ENCODE measurements at regions of chrX and their contacts with region 1.

Region 1: GRCh38 chrX:10722851-10723250 is 102.5 kb upstream of the MID1 start:
- DNase-seq: no peak
- H3K4me3 ChIP-seq: no peak overlapping the region
- CTCF ChIP-seq: peak; percentile 49

Region 2: GRCh38 chrX:9656277-9656676 is 1066.6 kb before region 1 on chrX:
- CTCF ChIA-PET with region 1: no interaction called
- POLR2A ChIA-PET with region 1: no interaction called
- DNase-seq: no peak
- H3K4me3 ChIP-seq: no peak overlapping the region
- CTCF ChIP-seq: no peak

Region 3: DNA sequence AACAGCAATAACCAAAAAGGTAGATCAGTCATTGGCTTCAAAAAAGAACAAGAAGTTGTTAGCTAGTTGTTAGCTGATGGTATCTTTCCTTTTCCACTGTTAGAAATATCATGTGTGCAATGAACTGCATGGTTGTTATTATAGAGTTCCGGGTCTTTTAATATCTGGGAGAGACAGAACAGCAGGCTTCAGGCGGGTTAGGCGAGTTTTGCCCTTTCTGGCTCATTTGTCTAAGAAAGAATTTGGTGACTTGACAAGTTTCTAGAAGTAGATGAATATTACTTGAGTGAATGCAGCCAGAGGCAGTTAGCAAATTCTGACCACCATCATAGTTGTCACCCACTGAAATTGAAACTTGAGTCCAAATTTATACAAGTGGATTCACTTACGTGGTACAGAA is 13.6 kb before region 1 on chrX:
- CTCF ChIA-PET with region 1: interaction called, 12 read pairs
- POLR2A ChIA-PET with region 1: no interaction called
- DNase-seq: no peak
- H3K4me3 ChIP-seq: no peak overlapping the region
- CTCF ChIP-seq: no peak

Region 4: DNA sequence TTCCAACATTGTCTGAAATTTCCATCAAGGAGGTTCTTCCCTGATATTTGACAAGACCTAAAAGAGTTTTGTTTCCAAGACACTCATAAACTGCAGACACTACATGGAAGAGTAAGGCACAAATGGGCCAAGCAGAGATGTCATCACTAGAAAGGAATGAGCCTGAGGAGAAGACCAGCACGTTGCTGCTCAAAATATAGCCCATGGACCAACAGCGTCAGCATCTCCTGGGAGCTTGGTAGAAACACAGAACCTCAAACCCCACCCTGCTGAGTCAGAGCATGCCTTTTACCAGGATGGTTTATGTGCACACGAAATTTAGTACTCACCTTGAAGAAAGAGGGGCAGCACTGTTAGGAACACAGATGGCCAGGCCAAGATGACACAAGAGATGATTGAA is 26.3 kb after region 1 on chrX:
- CTCF ChIA-PET with region 1: interaction called, 24 read pairs
- POLR2A ChIA-PET with region 1: no interaction called
- DNase-seq: no peak
- H3K4me3 ChIP-seq: no peak overlapping the region
- CTCF ChIP-seq: no peak

Region 5: GRCh38 chrX:10932842-10933440 is 210.1 kb after region 1 on chrX:
- CTCF ChIA-PET with region 1: no interaction called
- POLR2A ChIA-PET with region 1: no interaction called
- DNase-seq: no peak
- H3K4me3 ChIP-seq: no peak overlapping the region
- CTCF ChIP-seq: no peak

Region 6: GRCh38 chrX:11100281-11101035 is 377.6 kb after region 1 on chrX:
- CTCF ChIA-PET with region 1: interaction called, 35 read pairs
- POLR2A ChIA-PET with region 1: no interaction called
- DNase-seq: peak; percentile 28
- H3K4me3 ChIP-seq: no peak overlapping the region
- CTCF ChIP-seq: peak; percentile 31

Region 7: DNA sequence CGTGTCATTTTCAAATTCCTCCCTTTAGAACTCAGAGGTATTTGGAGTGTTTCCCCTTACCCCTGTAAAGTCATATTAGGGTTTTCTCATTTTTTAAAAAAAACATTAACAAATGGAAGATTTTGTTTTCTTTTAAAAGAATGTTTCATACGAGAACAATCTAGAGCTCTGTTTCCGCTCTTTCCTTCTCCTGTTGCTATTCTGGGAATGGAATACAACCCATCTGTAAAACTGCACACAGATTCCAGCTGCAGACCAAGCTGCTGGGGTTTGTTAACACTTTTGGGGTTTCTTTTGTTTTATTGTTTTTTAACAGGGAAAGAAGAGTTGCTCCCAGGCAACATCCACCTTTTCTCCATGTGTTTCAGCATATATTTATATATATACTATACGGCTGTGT is 449.6 kb after region 1 on chrX:
- CTCF ChIA-PET with region 1: no interaction called
- POLR2A ChIA-PET with region 1: no interaction called
- DNase-seq: no peak
- H3K4me3 ChIP-seq: no peak overlapping the region
- CTCF ChIP-seq: no peak

Measured in AG04449 (cell line).